IMR-90 (cell line): ENCODE measurements at regions of chr2 and their contacts with region 1.

Region 1: DNA sequence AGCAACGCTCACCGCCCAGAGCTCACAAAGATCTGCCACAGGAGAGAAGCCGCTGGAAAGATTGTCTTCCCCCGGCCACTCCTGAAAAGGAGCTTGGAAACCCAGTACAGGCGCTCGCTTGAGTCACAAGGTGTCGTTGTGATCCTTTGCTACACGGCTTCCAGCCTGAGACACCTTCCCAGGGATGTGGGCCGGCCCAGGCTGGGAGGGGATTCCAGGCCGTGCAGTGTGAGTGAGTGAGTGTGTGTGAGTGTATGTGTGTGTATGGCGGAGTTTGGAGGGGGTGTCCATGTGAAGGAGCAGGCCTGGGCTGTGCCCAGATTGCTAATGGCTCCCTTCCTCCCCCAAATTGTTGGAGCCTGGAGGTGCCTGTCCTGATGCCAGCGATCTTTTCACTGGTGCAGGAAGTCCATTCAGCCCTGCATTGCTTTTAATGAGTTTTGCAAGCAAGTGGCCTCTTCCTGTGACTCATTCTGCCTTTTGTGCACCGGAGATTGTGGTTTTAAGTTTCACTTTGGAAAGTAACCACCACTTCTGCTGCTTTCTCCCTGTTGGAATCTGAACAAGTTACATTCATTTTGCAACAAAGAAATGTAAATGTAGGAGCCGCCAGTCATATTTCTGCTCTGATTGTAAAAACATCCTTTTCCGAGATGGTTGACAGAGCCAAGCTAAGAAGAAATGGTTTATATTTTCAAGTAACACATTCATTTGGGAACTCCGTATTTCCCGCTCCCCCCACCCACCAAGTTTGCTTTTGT is 83.7 kb downstream of the LPIN1 start:
- DNase-seq: peak; percentile 98
- ATAC-seq: peak; percentile 83
- H3K4me3 ChIP-seq: peak overlapping the region; percentile 25; the same call in 1 of the 2 replicates
- H3K27ac ChIP-seq: peak overlapping the region; percentile 96
- H3K4me1 ChIP-seq: peaks cover 19% of the 10 kb centered on the region
- H3K27me3 ChIP-seq: no peaks in the 10 kb centered on the region
- CTCF ChIP-seq: peak; percentile 55
- POLR2A ChIP-seq: no peak
- RAD21 ChIP-seq: peak; percentile 68

Region 2: GRCh38 chr2:11505652-11506610 is 324.2 kb before region 1 on chr2:
- CTCF ChIA-PET with region 1: no interaction called
- POLR2A ChIA-PET with region 1: no interaction called
- dilution Hi-C with region 1: no loop called
- in situ Hi-C with region 1: no loop called
- intact Hi-C with region 1: no loop called
- DNase-seq: no peak
- ATAC-seq: no peak
- H3K4me3 ChIP-seq: no peak overlapping the region
- H3K27ac ChIP-seq: no peak overlapping the region
- H3K4me1 ChIP-seq: no peaks in the 10 kb centered on the region; the same call in 1 of the 2 replicates
- H3K27me3 ChIP-seq: peaks cover 15% of the 10 kb centered on the region
- CTCF ChIP-seq: no peak
- POLR2A ChIP-seq: no peak
- RAD21 ChIP-seq: no peak

Region 3: GRCh38 chr2:11863513-11864328 is 33.6 kb after region 1 on chr2:
- CTCF ChIA-PET with region 1: no interaction called
- POLR2A ChIA-PET with region 1: no interaction called
- dilution Hi-C with region 1: no loop called
- in situ Hi-C with region 1: no loop called
- intact Hi-C with region 1: no loop called
- DNase-seq: peak; percentile 82
- ATAC-seq: peak; percentile 99
- H3K4me3 ChIP-seq: peak overlapping the region; percentile 10; the same call in 1 of the 2 replicates
- H3K27ac ChIP-seq: peak overlapping the region; percentile 66
- H3K4me1 ChIP-seq: peaks cover 2% of the 10 kb centered on the region; the same call in 1 of the 2 replicates
- H3K27me3 ChIP-seq: no peaks in the 10 kb centered on the region; the same call in 1 of the 2 replicates
- CTCF ChIP-seq: peak; percentile 85
- POLR2A ChIP-seq: no peak
- RAD21 ChIP-seq: peak; percentile 93

Region 4: GRCh38 chr2:12120281-12121150 is 290.4 kb after region 1 on chr2:
- CTCF ChIA-PET with region 1: interaction called, 4 read pairs
- POLR2A ChIA-PET with region 1: no interaction called
- dilution Hi-C with region 1: no loop called
- in situ Hi-C with region 1: no loop called
- intact Hi-C with region 1: loop called (anchors 1 kb)
- DNase-seq: peak; percentile 80
- ATAC-seq: peak; percentile 87
- H3K4me3 ChIP-seq: no peak overlapping the region
- H3K27ac ChIP-seq: peak overlapping the region; percentile 63
- H3K4me1 ChIP-seq: peaks cover 15% of the 10 kb centered on the region
- H3K27me3 ChIP-seq: no peaks in the 10 kb centered on the region
- CTCF ChIP-seq: no peak
- POLR2A ChIP-seq: no peak
- RAD21 ChIP-seq: no peak

Region 5: GRCh38 chr2:12320991-12321641 is 491.0 kb after region 1 on chr2:
- CTCF ChIA-PET with region 1: no interaction called
- POLR2A ChIA-PET with region 1: no interaction called
- dilution Hi-C with region 1: no loop called
- in situ Hi-C with region 1: no loop called
- intact Hi-C with region 1: loop called (anchors 2 kb)
- DNase-seq: peak; percentile 98
- ATAC-seq: peak; percentile 88
- H3K4me3 ChIP-seq: no peak overlapping the region
- H3K27ac ChIP-seq: peak overlapping the region; percentile 12; the same call in 1 of the 2 replicates
- H3K4me1 ChIP-seq: peaks cover 15% of the 10 kb centered on the region
- H3K27me3 ChIP-seq: no peaks in the 10 kb centered on the region
- CTCF ChIP-seq: no peak; the same call in 1 of the 2 replicates
- POLR2A ChIP-seq: no peak
- RAD21 ChIP-seq: peak; percentile 37

Region 6: GRCh38 chr2:12456293-12457151 is 626.4 kb after region 1 on chr2:
- CTCF ChIA-PET with region 1: interaction called, 3 read pairs
- POLR2A ChIA-PET with region 1: no interaction called
- dilution Hi-C with region 1: no loop called
- in situ Hi-C with region 1: no loop called
- intact Hi-C with region 1: loop called (anchors 2 kb)
- DNase-seq: peak; percentile 99
- ATAC-seq: peak; percentile 86
- H3K4me3 ChIP-seq: no peak overlapping the region
- H3K27ac ChIP-seq: peak overlapping the region; percentile 50; the same call in 1 of the 2 replicates
- H3K4me1 ChIP-seq: peaks cover 19% of the 10 kb centered on the region
- H3K27me3 ChIP-seq: no peaks in the 10 kb centered on the region
- CTCF ChIP-seq: no peak
- POLR2A ChIP-seq: no peak
- RAD21 ChIP-seq: peak; percentile 24; the same call in 1 of the 2 replicates

Region 7: DNA sequence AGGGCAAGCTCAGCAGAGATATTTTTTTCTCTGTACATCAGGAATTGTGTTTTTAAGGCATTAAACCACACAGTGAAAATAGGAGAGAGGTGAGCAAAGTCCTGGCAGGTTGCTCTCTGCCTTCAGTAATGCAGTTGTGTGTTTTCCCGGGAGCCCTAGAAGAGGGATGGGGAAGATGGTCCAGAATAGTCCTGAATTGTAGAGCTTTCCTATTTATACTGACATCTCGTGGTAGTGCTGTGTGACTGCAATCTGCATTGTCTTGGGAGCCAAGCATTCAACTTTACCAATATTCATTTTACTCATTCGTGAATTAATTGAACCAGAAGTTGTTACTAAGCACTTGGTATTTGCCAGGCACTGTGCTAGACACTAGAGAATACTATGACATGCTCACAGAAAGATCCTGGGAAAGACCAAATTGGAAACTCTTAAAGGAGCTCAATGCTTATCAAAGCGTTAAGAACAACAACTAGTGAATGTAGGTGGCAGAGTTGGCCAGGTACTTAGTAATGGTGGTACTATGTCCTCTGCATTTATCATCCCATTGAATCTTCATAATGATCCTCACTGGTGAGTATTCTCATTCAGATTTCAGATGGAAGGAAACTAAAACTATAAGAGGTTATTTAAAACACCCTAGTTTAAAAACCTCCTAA is 1101.2 kb after region 1 on chr2:
- CTCF ChIA-PET with region 1: interaction called, 3 read pairs
- POLR2A ChIA-PET with region 1: no interaction called
- dilution Hi-C with region 1: no loop called
- in situ Hi-C with region 1: loop called (anchors 10 kb)
- intact Hi-C with region 1: loop called (anchors 1 kb)
- DNase-seq: peak; percentile 63
- ATAC-seq: peak; percentile 93
- H3K4me3 ChIP-seq: no peak overlapping the region
- H3K27ac ChIP-seq: no peak overlapping the region
- H3K4me1 ChIP-seq: peaks cover 10% of the 10 kb centered on the region
- H3K27me3 ChIP-seq: no peaks in the 10 kb centered on the region
- CTCF ChIP-seq: peak; percentile 90
- POLR2A ChIP-seq: 0 out of 2 replicates have a peak, but pooled peaks have one; percentile 29
- RAD21 ChIP-seq: peak; percentile 93